ENCODE measurements at regions of chr5 and their contacts with region 1.

Region 1: GRCh38 chr5:131634996-131635754 is at the start of gene RAPGEF6:
- DNase-seq: peak; percentile 100
- H3K4me3 ChIP-seq: peak within 1 kb of the TSS; percentile 64 to 84 (median 66)
- H3K27ac ChIP-seq: peak within 1 kb of the TSS; percentile 92 to 100 (median 99)
- H3K4me1 ChIP-seq: peaks cover 2 to 48% (median 35%) of the 10 kb centered on the region in 4 donors
- H3K27me3 ChIP-seq: no peaks in the 10 kb centered on the region
- CTCF ChIP-seq: peak in 1 of 4 experiments; percentile 12
- EP300 ChIP-seq: peak in 1 of 4 donors; percentile 87
- POLR2A ChIP-seq: peak; percentile 70 to 80
- total RNA-seq, gene RAPGEF6: 16.1 to 30.5 (median 18.6) TPM

Region 2: DNA sequence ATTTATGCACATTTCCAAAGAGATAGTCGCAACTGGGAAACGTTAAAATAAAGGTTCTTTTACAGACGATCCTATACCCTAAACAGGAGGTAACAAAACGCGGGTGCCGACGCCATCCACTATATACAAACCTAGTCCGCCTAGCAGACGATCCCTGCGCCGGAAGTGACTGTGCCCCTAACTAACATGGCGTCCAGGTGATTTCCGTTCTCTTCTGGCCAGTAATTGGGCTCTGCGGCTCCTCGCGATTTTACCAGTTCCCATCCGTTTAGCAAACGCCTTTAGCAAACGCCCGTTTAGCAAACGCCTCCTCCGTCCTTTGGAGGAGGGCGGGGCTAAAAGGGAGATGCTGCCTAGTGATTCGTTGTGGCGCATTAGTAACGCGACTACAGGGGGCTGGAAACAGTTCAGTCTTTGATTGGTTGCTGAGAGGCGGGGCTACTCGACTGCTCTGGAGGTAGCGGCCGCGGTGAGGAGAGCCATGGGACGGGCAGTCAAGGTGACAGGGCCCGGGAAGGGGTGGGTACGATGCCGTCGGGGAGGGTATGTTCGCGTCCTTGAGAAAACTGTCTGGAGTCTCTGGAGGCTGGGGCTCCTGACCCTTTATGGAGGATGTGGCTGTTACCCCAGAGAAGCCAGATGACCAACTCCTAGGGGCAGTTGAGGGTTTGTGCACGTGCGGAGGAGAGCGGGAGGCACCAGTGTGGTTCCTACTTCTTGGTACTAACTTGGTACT is 464.5 kb before region 1 on chr5 and contains the start of gene LYRM7:
- intact Hi-C with region 1: loop called (anchors 10 kb)
- DNase-seq: peak; percentile 98
- H3K4me3 ChIP-seq: peak within 1 kb of the TSS; percentile 50 to 66 (median 62)
- H3K27ac ChIP-seq: peak within 1 kb of the TSS; percentile 70 to 85 (median 83)
- H3K4me1 ChIP-seq: peaks cover 0 to 22% (median 13%) of the 10 kb centered on the region in 4 donors
- H3K27me3 ChIP-seq: no peaks in the 10 kb centered on the region
- CTCF ChIP-seq: peak in 1 of 4 experiments; percentile 9
- EP300 ChIP-seq: no peak
- POLR2A ChIP-seq: peak; percentile 41 to 58
- total RNA-seq, gene LYRM7: 6.4 to 10.7 (median 9.0) TPM

Region 3: DNA sequence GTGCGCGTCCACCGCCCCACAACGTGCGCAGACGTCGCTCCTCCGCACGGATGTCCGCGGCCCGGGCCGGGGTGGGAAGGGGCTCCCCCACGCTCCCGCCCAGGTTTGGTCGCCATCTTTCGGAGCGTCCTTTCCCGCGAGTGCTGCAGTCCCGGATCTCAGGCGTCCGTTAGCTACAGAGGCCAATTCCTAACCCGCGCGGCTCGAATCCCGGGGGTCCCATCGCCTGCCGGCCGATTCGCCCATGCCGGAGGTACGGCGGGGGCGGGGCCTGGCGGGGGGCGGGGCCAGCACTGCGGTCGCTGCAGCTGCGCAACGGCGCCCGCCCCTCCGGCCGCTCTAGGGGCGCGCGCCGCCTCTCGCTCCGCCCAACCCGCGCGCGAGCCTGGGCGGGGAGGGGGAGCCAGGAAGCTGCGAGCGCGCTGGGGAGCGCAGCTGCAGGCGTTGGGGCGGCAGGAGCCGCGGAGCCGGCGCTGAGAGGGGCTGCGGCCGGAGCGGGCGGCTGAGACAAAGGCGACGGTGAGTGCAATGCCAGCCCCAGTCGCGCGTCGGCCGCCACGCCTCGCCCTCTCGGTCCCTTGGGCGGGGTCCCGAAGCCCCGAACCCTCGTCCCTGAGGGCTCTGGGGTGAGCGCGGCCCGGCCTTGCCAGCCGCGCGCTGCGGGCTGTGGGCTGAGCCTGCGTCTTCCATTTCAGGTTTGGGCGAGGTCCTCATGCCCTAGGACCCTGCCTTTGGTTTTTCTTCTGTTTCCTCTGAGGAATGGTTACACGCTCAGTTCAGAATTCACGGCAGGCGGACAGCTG is 371.3 kb before region 1 on chr5 and contains the start of gene CDC42SE2:
- intact Hi-C with region 1: loop called (anchors 10 kb)
- DNase-seq: peak; percentile 89
- H3K4me3 ChIP-seq: peak within 1 kb of the TSS; percentile 72 to 98 (median 85)
- H3K27ac ChIP-seq: peak within 1 kb of the TSS; percentile 84 to 92 (median 89)
- H3K4me1 ChIP-seq: peaks cover 0 to 24% (median 15%) of the 10 kb centered on the region in 4 donors
- H3K27me3 ChIP-seq: no peaks in the 10 kb centered on the region
- CTCF ChIP-seq: no peak
- EP300 ChIP-seq: no peak
- POLR2A ChIP-seq: peak; percentile 68 to 73
- total RNA-seq, gene CDC42SE2: 24.1 to 33.2 (median 28.6) TPM

Region 4: GRCh38 chr5:131671994-131672655 is 37.0 kb after region 1 on chr5:
- intact Hi-C with region 1: loop called (anchors 2 kb)
- DNase-seq: no peak
- H3K4me3 ChIP-seq: no peak overlapping the region
- H3K27ac ChIP-seq: peak overlapping the region; percentile 76 to 90 (median 86)
- H3K4me1 ChIP-seq: peaks cover 0 to 70% (median 54%) of the 10 kb centered on the region in 4 donors
- H3K27me3 ChIP-seq: no peaks in the 10 kb centered on the region
- CTCF ChIP-seq: no peak
- EP300 ChIP-seq: peak; percentile 27 to 86 (median 81)
- POLR2A ChIP-seq: no peak

Measured in sigmoid colon (tissue), 7 donors.